ENCODE measurements at regions of chr6 and their contacts with region 1.

Region 1: DNA sequence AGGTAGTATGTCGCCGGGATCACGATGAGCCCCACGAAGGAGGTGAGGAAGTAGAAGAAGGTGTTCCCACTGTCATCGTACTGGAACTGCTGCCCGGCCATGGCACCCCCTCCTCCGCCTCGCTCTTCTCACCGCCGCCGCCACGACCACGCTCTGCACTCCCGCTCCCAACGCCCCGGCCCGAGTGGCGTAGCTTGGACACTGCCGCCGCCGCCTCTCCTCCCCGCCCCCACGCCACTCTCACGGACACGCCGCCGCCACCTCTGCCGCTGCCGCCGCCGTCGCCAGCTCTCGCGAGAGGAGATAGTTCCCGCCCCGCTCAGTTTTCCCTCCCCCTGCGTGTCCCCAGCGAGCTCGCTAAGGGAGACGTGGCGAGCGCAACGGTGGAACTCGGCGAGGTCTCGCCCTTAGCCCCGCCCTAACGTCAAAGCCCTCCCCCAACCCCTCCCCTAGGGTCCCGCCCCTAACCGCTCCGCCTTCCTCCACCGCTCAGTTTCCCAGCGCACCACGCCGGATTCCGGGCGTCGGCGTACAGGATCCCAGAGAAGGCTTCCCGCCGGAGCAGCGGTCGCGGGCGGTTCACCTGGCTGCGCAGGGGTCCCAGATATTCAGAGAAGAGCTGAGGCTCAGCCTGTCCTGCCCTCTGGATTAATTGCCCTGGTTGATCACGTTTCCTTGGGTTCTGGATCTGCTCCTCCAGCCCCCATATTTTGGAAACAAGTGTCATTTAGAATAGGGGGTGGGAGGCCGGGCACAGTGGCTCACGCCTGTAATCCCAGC is at the start of gene SEC63:
- DNase-seq: peak; percentile 98
- H3K4me3 ChIP-seq: peak within 1 kb of the TSS; percentile 98
- H3K27ac ChIP-seq: peak within 1 kb of the TSS; percentile 83
- H3K4me1 ChIP-seq: peaks cover 22% of the 10 kb centered on the region
- CTCF ChIP-seq: no peak
- total RNA-seq, gene SEC63: 13.0 and 13.6 TPM in 2 replicates

Region 2: GRCh38 chr6:107712665-107713551 is 245.2 kb before region 1 on chr6:
- CTCF ChIA-PET with region 1: no interaction called
- POLR2A ChIA-PET with region 1: no interaction called
- intact Hi-C with region 1: loop called (anchors 5 kb)
- DNase-seq: peak; percentile 78
- H3K4me3 ChIP-seq: peak overlapping the region; percentile 55
- H3K27ac ChIP-seq: peak overlapping the region; percentile 35
- H3K4me1 ChIP-seq: peaks cover 37% of the 10 kb centered on the region
- CTCF ChIP-seq: no peak

Region 3: DNA sequence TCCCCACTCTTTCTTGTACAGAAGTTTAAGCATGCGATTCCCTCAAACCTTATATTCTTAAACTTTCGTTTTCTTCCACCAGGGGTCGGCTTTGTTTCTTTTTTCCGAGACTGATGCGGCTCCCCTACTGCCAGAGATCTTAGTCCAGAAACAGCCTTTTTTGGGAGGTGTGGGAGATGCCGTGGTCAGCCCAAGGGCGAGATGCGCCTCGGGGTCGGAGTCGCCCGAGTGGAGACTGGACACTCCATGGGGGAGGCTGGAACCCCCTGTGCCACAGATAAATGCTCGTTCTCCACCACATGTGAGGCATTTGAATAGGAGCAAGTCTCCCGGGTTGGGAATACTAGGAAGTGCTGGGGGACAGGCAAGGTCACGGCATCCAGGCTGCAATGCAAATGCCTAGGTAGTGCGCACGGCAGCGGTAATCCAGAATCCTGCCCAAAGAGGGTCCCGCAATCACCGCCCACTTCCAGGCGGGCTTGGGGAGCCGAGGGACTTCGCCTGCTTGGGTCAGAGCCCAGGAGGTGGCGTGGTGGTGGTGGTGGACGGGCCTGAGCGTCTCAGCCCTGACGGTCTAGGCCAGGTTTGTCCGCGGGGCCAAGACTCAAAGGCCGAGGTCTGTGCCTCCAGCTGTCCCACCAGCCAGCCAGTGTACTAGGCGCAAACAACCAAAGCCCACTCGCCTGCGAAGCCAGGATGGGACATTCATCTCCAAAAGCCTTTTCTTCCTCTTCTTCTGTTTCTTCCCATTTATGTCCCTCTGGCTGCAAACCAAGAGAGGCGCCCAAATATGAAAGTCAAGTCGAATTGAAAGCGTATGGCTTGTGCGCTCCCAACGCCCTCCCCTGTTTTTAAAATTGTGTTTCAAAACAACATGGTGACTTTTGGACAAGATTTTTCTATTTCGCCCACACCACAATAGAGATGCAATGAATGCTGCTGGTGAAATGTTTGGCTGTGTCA is 155.7 kb after region 1 on chr6:
- CTCF ChIA-PET with region 1: no interaction called
- POLR2A ChIA-PET with region 1: no interaction called
- intact Hi-C with region 1: no loop called
- DNase-seq: peak; percentile 45
- H3K4me3 ChIP-seq: no peak overlapping the region
- H3K27ac ChIP-seq: no peak overlapping the region
- H3K4me1 ChIP-seq: peaks cover 5% of the 10 kb centered on the region
- CTCF ChIP-seq: peak; percentile 80

Region 4: DNA sequence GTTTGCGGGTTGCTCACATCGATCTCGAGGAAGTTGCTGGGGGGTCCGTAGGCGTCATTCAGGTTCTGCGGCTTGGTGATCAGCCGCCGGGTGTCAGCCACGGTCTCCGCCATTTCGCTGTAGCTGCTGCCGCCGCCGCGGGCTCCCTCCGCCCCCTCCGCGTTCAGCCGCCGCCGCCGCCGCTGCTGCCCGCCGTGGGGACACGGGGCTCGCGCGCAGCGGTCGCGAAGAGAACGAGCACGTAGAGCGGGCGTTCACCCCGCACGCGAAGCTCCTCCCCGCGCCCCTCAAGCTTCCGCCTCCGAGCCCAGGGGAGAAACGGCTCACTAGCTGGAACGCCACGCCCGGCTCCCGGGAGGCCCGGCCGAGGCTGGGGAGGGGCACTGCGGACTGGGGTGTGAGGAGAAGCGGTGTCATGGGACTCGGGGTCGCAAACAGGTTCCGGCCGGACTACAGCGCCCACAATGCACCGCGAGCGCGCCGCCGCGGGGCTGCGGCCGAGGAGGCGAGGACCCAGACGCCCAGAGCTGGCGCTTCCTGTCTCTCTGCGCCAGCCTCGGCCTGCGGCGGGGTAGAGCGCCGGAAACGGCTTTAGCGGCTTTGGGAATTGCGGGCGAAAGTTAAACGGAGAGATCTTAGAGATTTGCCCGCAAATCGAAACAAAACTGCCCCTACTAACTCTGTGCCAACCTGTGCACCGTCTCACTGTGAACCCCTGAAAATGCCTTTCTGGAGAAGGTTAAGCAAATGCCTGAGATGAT is 302.9 kb after region 1 on chr6 and contains the start of gene SNX3:
- CTCF ChIA-PET with region 1: no interaction called
- POLR2A ChIA-PET with region 1: no interaction called
- intact Hi-C with region 1: loop called (anchors 10 kb)
- DNase-seq: peak; percentile 95
- H3K4me3 ChIP-seq: peak within 1 kb of the TSS; percentile 95
- H3K27ac ChIP-seq: peak within 1 kb of the TSS; percentile 73
- H3K4me1 ChIP-seq: peaks cover 47% of the 10 kb centered on the region
- CTCF ChIP-seq: peak; percentile 19; the same call in 1 of the 2 replicates
- total RNA-seq, gene SNX3: 67.9 and 72.9 TPM in 2 replicates

Region 5: GRCh38 chr6:108286366-108286765 is 328.3 kb after region 1 on chr6:
- CTCF ChIA-PET with region 1: no interaction called
- POLR2A ChIA-PET with region 1: no interaction called
- intact Hi-C with region 1: no loop called
- DNase-seq: no peak
- H3K4me3 ChIP-seq: no peak overlapping the region
- H3K27ac ChIP-seq: no peak overlapping the region
- H3K4me1 ChIP-seq: peaks cover 26% of the 10 kb centered on the region
- CTCF ChIP-seq: no peak

Region 6: GRCh38 chr6:109095027-109095834 is 1137.1 kb after region 1 on chr6 and contains the start of gene CEP57L1:
- CTCF ChIA-PET with region 1: no interaction called
- POLR2A ChIA-PET with region 1: no interaction called
- intact Hi-C with region 1: loop called (anchors 5 kb)
- DNase-seq: peak; percentile 98
- H3K4me3 ChIP-seq: peak within 1 kb of the TSS; percentile 92
- H3K27ac ChIP-seq: peak within 1 kb of the TSS; percentile 87
- H3K4me1 ChIP-seq: peaks cover 25% of the 10 kb centered on the region
- CTCF ChIP-seq: peak; percentile 46; the same call in 1 of the 2 replicates
- total RNA-seq, gene CEP57L1: 22.7 and 26.7 TPM in 2 replicates

Measured in OCI-LY7 (cell line).